Cardiac septum (tissue), 1 donor: ENCODE measurements at regions of chr5 and their contacts with region 1.

Region 1: GRCh38 chr5:149485655-149486425 is 65.4 kb downstream of the CSNK1A1 start:
- DNase-seq: no peak

Region 2: DNA sequence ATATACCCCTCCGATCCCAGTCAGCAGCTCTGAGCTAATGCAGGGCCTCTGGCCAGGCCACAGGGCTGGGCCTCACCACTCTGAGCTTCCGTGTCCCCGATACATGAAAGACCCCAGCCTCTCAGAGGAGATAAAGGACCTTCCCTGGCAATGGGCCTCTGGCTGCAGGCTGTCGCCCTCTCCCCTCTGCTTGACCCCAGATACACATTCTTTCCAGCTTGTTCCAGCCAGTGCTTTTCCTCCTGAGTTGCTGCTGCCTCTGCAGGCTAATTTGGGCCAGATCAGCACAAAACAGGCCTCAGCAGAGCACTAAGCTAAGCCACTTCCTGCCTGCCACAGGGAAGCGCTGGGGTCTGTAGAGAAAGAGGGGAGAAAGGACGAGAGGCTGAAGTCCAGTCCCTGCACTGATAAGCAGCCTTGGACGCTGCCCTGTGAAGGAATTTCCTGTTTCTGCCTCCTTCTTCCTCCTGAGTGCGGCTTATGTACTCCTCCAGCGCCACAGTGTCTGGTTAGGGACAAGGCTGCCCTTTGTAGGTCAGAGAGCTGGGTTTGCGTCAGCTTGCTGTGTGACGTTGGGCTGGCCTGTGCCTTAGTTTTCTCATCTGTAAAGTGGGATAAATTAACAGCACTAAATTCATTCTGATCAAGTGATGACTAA is 33.7 kb before region 1 on chr5:
- intact Hi-C with region 1: loop called (anchors 5 kb)
- DNase-seq: peak; percentile 85

Region 3: GRCh38 chr5:149540089-149540488 is 54.2 kb after region 1 on chr5:
- intact Hi-C with region 1: no loop called
- DNase-seq: no peak

Region 4: DNA sequence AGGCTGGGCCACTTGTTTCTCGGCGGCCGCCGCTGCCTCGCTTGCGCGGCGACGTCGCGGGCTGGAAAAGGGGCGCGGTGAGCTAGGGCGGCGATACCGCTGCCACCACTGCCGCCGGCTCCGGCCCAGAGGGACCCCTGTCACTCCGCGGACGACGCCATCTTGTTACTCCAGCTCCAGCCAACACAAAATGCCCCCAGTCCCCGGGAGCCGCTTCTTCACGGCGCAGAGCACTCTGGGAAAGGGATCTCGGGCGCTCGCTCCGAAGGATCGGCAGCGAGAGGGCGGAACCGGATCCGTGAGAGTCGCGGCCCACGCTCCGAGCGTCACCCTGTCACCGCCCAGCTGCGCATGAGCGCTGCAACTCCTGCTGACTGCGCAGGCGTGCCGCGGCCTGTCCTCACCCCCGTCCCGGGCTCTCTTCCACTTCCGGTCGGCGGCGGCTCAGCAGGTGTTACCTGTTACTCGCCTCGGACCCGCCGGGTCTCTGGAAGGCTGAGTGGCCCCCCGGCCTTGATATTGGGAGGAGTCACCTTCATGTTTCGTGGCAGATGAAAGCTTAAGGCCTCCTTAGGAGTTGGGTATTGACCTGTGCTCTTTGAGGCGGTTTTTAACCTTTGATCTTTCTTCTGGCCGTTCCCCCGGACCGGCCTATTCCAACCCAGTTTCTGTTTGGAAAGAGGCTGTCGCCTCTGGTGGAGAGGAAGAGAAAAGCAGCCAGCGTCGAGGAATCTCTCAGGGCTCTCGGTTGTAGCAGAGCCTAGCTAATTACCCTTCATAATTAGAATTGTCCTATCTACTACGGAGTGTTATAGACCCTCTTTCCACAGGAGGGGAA is 65.6 kb after region 1 on chr5 and contains the start of gene CSNK1A1:
- intact Hi-C with region 1: loop called (anchors 5 kb)
- DNase-seq: peak; percentile 99
- total RNA-seq, gene CSNK1A1: 206 TPM

Region 5: DNA sequence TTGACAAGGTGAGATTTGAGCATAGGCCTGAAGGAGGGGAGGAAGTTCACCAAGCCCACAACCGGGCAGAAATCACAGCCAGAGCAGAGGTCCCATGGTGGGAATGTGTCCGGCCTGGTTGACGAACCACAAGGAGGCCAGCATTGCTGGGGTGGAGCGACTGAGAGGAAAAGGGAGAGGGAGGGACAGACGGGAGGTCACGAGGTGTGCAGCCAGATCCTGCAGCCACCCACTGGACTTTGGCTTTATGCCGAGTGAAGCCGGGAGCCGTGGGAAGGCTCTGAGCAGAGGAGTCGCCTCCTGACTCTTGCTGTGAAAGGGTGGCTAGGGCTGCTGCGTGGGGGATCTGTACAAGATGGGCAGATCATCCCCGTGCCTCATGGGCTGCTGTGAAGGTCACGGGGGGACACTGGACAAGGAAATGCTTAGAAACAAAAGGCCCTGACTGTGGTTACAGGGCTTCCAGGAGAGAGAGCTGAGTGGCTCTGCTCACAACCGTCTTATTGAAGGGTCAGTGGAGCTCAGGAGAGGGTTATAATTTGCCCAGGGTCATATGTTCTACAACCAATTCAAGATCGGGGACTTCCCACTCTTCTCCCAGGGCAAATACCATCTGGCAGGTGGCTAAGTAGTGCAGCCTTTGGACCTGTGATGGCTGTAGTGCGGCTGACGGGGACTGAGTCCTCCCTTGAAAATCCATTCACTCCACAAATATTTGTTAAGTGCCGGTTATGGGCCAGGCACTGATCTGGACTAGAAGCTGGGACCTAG is 942.5 kb after region 1 on chr5:
- intact Hi-C with region 1: no loop called
- DNase-seq: peak; percentile 80